ENCODE measurements at regions of chr9 and their contacts with region 1.

Region 1: GRCh38 chr9:126500684-126501382 is 112.9 kb upstream of the LMX1B start:
- DNase-seq: peak; percentile 79 to 84 (median 82)
- ATAC-seq: peak; percentile 90
- H3K4me3 ChIP-seq: no peak overlapping the region
- H3K27ac ChIP-seq: no peak overlapping the region
- H3K4me1 ChIP-seq: peaks cover 0 to 39% of the 10 kb centered on the region in 2 experiments; a peak in 2 of 5 replicates
- H3K27me3 ChIP-seq: peaks cover 8 to 64% of the 10 kb centered on the region in 2 experiments; a peak in 3 of 5 replicates
- CTCF ChIP-seq: peak; percentile 92 to 94 (median 92)
- EP300 ChIP-seq: no peak
- POLR2A ChIP-seq: no peak
- RAD21 ChIP-seq: peak; percentile 77 to 93

Region 2: GRCh38 chr9:126558051-126558665 is 57.3 kb after region 1 on chr9:
- CTCF ChIA-PET with region 1: interaction called, 51 read pairs
- POLR2A ChIA-PET with region 1: interaction called, 3 read pairs
- in situ Hi-C with region 1: loop called (anchors 5 kb)
- intact Hi-C with region 1: loop called (anchors 1 kb)
- DNase-seq: peak; percentile 62 to 85 (median 78)
- ATAC-seq: peak; percentile 86
- H3K4me3 ChIP-seq: no peak overlapping the region
- H3K27ac ChIP-seq: no peak overlapping the region
- H3K4me1 ChIP-seq: no peaks in the 10 kb centered on the region
- H3K27me3 ChIP-seq: peaks cover 2 to 22% of the 10 kb centered on the region in 2 experiments; a peak in 2 of 5 replicates
- CTCF ChIP-seq: peak; percentile 84 to 87 (median 87)
- EP300 ChIP-seq: no peak
- POLR2A ChIP-seq: no peak
- RAD21 ChIP-seq: peak in 1 of 2 experiments; percentile 78; a peak in 2 of 4 replicates

Region 3: DNA sequence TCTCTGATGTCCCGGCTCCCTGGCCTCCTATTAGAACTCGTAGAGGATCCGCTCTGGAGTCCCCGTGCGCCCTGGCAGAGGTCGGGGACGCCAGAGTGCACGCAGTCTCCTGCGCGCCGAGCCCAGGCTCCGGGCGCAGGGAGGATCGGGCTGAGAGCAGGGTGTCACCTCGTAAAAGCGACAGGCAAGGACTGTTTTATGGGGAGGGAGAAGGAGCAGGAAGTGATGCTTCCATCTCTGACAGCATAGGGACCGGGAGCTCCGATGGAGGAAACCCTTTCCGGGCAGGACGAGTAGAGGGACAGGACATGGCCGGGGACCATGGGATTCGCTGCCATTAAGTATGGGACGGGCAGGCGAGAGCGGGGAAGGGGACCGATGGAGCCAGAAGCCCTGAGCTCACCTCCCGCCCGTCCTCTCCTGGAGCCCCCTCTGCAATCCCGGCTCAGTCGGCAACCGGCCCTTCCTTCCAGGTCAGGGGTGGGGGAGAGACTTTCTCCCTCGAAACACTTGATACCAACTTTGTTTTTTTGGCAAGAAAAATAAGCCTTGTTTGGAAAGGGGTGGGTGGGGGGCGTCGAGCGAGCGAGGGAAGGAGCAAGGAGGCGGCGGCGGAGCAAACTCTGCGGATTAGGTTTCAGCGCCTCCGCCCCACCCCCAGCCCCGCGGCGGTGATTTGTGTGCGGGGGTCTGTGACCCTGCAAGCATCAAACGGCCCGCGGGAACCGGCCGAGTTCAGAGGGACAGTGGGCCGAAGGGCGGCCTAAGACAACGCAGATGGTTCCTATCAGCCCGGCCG is 125.5 kb after region 1 on chr9:
- CTCF ChIA-PET with region 1: no interaction called
- POLR2A ChIA-PET with region 1: no interaction called
- in situ Hi-C with region 1: no loop called
- intact Hi-C with region 1: no loop called
- DNase-seq: no peak
- ATAC-seq: no peak
- H3K4me3 ChIP-seq: no peak overlapping the region
- H3K27ac ChIP-seq: no peak overlapping the region
- H3K4me1 ChIP-seq: peaks cover 0 to 26% of the 10 kb centered on the region in 2 experiments; a peak in 2 of 5 replicates
- H3K27me3 ChIP-seq: peaks cover 55 to 88% of the 10 kb centered on the region in 2 experiments
- CTCF ChIP-seq: no peak
- EP300 ChIP-seq: no peak
- POLR2A ChIP-seq: no peak
- RAD21 ChIP-seq: no peak

Region 4: GRCh38 chr9:126690431-126691350 is 189.9 kb after region 1 on chr9:
- CTCF ChIA-PET with region 1: no interaction called
- POLR2A ChIA-PET with region 1: no interaction called
- in situ Hi-C with region 1: loop called (anchors 10 kb)
- intact Hi-C with region 1: loop called (anchors 5 kb)
- DNase-seq: peak; percentile 66 to 81 (median 80)
- ATAC-seq: peak; percentile 92
- H3K4me3 ChIP-seq: no peak overlapping the region
- H3K27ac ChIP-seq: no peak overlapping the region
- H3K4me1 ChIP-seq: peaks cover 0 to 14% of the 10 kb centered on the region in 2 experiments; a peak in 2 of 5 replicates
- H3K27me3 ChIP-seq: peaks cover 17 to 66% of the 10 kb centered on the region in 2 experiments; a peak in 4 of 5 replicates
- CTCF ChIP-seq: peak; percentile 64 to 78 (median 72)
- EP300 ChIP-seq: no peak
- POLR2A ChIP-seq: no peak
- RAD21 ChIP-seq: peak in 1 of 2 experiments; percentile 52; a peak in 2 of 4 replicates

Region 5: GRCh38 chr9:126773004-126773607 is 272.3 kb after region 1 on chr9:
- CTCF ChIA-PET with region 1: interaction called, 3 read pairs
- POLR2A ChIA-PET with region 1: no interaction called
- in situ Hi-C with region 1: loop called (anchors 5 kb)
- intact Hi-C with region 1: no loop called
- DNase-seq: peak; percentile 38 to 52 (median 44)
- ATAC-seq: peak; percentile 86
- H3K4me3 ChIP-seq: no peak overlapping the region
- H3K27ac ChIP-seq: no peak overlapping the region
- H3K4me1 ChIP-seq: no peaks in the 10 kb centered on the region; a peak in 1 of 5 replicates
- H3K27me3 ChIP-seq: peaks cover 21 to 32% of the 10 kb centered on the region in 2 experiments
- CTCF ChIP-seq: peak; percentile 64 to 76 (median 67)
- EP300 ChIP-seq: no peak
- POLR2A ChIP-seq: no peak
- RAD21 ChIP-seq: peak; percentile 30 to 63

Region 6: DNA sequence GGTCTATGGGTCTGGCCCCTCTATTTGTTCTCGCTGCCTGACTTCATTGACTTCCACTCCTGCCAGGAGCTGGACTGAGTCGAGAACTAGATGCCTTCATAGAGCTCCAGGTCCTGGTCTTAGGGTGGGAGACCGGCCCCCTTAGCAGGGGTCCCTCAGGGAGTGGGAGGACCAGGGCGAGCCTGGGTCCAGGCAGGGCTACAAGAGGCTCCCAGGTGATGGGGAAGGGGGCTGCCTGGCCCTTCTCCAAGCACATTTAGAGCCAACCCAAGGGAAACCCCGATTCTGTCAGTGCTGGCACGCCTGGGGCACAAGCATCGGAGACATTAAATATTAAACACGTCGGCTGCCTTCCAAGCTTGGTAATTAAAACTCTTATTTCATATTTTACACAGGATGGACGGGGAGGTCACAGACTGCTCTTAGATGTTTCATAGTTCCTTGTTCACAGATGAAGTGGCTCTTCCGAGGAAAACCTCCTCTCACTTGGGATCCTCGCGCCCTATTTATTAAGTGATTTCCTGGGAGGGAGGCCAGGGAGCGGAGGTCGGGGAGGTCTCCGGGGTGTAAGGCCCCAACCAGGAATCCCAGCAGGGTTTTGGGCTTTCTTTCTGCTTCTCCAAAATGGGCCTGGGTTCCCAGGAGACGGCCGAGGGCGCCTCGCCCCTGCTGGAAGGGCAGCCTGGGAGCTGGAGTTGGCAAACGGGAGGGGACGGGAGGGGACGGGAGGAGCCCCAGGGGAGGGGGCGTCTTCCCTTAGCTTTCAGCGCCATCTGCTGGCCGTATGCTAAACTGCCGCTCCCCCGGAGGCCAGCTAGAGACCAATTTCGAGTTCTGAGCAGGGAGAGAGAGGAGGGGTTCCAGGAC is 280.6 kb after region 1 on chr9:
- CTCF ChIA-PET with region 1: interaction called, 13 read pairs
- POLR2A ChIA-PET with region 1: no interaction called
- in situ Hi-C with region 1: no loop called
- intact Hi-C with region 1: loop called (anchors 2 kb)
- DNase-seq: peak; percentile 83 to 93 (median 90)
- ATAC-seq: peak; percentile 97
- H3K4me3 ChIP-seq: no peak overlapping the region
- H3K27ac ChIP-seq: no peak overlapping the region
- H3K4me1 ChIP-seq: peaks cover 0 to 3% of the 10 kb centered on the region in 2 experiments; a peak in 1 of 5 replicates
- H3K27me3 ChIP-seq: peaks cover 4 to 43% of the 10 kb centered on the region in 2 experiments; a peak in 4 of 5 replicates
- CTCF ChIP-seq: peak; percentile 88 to 93 (median 90)
- EP300 ChIP-seq: no peak
- POLR2A ChIP-seq: no peak
- RAD21 ChIP-seq: peak; percentile 84 to 88